GM10248 (cell line): ENCODE measurements at regions of chr11 and their contacts with region 1.

Region 1: GRCh38 chr11:73493956-73494598 is 103.8 kb downstream of the FAM168A start:
- DNase-seq: no peak
- CTCF ChIP-seq: no peak

Region 2: GRCh38 chr11:73478738-73479347 is 15.2 kb before region 1 on chr11:
- CTCF ChIA-PET with region 1: interaction called, 11 read pairs
- POLR2A ChIA-PET with region 1: no interaction called
- DNase-seq: no peak
- CTCF ChIP-seq: peak; percentile 53

Region 3: DNA sequence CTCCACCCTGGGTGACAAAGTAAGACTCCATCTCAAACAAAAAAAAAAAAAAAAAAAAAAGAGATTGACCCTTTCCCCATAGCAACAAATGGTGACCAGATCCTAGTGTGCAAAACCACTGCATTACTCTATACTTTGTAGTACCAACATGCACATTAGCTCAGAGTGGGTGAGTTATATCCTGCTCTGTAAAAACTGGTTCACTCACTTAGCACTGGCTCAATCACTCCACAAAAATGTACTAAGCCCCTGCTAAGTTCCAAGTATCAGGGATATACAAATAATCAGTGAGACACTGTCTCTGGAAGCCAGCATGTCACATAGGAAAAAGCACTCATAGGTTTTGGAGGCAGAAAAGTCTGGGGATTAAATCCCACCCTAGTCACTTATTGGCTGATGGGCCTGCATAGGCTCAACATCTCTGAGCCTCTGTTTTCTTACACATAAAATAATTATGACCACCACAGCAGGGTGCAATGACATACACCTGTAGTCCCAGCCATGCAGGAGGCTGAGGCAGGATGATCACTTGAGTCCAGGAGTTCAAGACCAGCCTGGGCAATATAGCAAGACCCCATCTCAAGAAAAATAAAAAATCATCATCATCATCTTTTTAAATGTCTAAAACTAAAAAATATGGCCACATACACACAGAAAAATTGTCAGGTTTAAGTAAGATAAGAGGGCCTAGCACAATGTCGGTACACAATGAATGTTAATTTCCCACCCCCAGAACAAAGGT is 91.9 kb after region 1 on chr11:
- CTCF ChIA-PET with region 1: no interaction called
- POLR2A ChIA-PET with region 1: interaction called, 10 read pairs
- DNase-seq: no peak
- CTCF ChIP-seq: no peak